Aorta (tissue), 5 donors: ENCODE measurements at regions of chr1 and their contacts with region 1.

Region 1: DNA sequence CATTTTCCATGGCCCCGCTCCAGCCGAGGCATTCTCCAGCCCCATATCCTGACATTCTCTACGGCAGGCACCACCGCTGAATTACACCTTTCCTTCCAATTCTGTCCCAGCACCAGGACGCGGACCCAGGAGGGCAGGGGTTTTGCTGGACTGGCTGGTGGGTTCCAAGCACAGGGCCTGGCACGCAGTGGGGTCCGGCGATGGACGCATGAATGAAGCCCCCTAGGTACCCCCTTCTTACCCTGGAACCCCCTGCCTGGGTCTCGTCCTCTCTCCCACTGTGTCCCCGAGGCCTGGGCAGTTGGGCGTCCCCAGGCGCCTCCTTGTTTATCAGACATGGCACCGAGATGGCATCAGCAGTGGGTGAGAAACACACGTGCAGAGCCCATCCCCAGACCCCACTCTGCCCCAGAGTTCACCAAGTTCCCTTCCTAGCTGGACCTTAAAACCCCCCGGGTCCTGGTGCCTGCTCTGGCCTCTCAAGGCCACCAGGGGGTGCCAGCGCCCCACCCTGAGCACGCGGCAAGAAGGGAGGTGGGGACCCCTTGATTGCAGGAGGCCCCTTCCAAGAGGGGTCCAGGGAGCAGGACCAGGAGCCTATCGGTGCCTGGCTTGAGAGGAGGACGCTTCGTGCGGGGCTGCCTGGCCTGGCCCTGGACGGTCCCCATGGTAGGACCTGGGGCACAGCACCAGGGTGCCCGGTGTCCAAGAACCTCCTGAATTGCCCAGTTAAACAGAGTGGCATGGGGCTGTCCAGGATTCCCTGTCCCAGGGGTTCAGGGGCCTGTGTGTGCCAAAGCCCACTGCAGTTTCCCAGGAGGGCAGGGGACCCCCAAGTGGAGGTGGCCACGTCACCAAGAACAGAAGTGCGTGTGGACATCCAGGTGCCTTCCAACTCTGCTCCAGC is 46.1 kb downstream of the MEGF6 start:
- DNase-seq: no peak
- ATAC-seq: no peak
- H3K4me3 ChIP-seq: no peak overlapping the region
- H3K27ac ChIP-seq: no peak overlapping the region
- H3K4me1 ChIP-seq: no peaks in the 10 kb centered on the region
- H3K27me3 ChIP-seq: no peaks in the 10 kb centered on the region

Region 2: DNA sequence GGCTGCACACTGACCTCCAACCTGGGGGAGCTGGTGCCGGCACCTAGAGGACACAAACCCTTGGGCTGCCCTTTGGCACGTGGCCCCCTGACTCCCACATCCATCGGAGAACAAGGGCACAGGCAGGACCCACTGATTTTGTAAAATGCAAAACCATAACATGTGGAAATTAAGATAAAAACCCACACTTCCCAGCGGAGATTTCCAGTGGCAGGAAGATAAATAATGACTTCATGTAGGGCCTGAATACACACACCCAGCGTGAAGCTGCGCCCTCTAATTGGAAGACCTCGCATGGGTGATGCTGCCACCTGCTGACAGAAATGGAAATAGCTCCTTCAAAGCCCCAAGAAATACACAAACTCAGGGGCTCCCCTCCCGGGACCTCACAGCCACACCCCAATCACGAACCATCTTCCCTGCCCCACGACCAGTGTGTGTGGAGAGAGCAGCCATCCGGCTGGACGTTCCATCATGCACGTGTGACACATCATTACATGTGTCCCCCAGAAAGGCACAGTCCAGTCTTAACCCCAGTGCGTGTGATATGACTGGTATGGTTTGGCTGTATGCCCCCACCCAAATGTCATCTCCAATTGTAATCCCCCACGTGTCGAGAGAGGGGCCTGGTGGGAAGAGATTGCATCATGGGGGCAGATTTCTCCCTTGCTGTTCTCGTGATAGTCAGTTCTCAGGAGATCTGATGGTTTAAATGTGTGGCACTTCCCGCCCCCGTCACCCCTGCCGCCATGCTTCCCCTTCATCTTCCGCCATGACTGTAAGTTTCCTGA is 53.9 kb after region 1 on chr1:
- intact Hi-C with region 1: loop called (anchors 1 to 2 kb)
- DNase-seq: peak in 1 of 2 donors; percentile 78
- ATAC-seq: peak; percentile 79
- H3K4me3 ChIP-seq: no peak overlapping the region
- H3K27ac ChIP-seq: no peak overlapping the region
- H3K4me1 ChIP-seq: no peaks in the 10 kb centered on the region
- H3K27me3 ChIP-seq: no peaks in the 10 kb centered on the region

Region 3: DNA sequence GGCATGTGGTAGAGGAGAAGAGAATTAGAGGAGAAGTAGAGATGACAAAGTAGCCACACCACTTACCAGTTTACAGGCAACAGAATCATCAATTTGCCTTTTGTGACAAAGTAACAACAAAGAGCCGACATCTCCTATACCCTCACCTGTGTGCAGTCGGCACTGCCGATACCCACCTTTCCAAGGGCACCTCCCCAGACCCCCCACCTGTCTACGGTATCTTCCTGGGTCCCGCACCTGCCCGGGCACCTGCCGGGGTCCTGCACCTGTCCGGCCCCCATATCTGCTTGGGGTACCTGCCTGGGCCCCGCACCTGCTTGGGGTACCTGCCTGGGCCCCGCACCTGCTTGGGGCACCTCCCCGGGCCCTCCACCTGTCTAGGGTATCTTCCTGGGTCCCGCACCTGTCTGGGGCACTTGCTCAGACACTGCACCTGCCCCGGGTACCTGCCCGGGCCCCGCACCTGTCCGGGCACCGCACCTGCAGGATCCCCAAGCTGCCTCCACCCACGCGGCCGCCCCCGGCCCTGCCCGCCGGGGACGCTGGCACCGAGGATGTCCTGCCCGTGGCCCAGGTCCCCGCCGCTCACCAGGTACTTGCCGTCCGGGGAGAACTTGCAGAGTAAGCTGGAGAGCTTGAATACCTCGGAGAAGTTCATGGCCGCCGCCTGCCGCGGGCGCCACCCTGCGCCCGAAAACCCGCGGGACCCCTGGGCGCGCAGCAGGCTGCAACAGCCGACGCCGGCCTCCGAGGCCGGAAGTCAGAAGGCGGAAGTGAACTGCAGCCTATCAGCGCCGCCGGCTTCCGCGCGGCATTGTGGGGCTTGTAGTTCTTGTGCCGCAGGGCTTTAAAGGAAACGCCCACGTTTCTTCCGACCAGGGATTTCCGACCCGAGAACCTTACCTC is 84.4 kb after region 1 on chr1 and contains the start of gene WRAP73:
- intact Hi-C with region 1: no loop called
- DNase-seq: peak; percentile 92 to 96
- ATAC-seq: peak; percentile 92
- H3K4me3 ChIP-seq: peak within 1 kb of the TSS; percentile 52 to 99
- H3K27ac ChIP-seq: no peak within 1 kb of the TSS
- H3K4me1 ChIP-seq: no peaks in the 10 kb centered on the region
- H3K27me3 ChIP-seq: no peaks in the 10 kb centered on the region
- total RNA-seq, gene WRAP73: 10.6 to 17.4 TPM